Posterior vena cava (tissue), 2 donors: ENCODE measurements at regions of chr11 and their contacts with region 1.

Region 1: GRCh38 chr11:57644748-57645688 is 4.7 kb downstream of the YPEL4 start:
- DNase-seq: peak; percentile 91

Region 2: GRCh38 chr11:57456960-57457642 is 187.9 kb before region 1 on chr11:
- intact Hi-C with region 1: loop called in 1 of 2 experiments (anchors 10 kb)
- DNase-seq: peak; percentile 98

Region 3: GRCh38 chr11:57567515-57568329 is 77.3 kb before region 1 on chr11 and contains the start of gene UBE2L6:
- intact Hi-C with region 1: loop called (anchors 2 to 5 kb)
- DNase-seq: peak; percentile 96
- total RNA-seq, gene UBE2L6: 50.3 to 56.9 TPM

Region 4: GRCh38 chr11:57588046-57588710 is 56.8 kb before region 1 on chr11:
- intact Hi-C with region 1: no loop called
- DNase-seq: no peak

Region 5: DNA sequence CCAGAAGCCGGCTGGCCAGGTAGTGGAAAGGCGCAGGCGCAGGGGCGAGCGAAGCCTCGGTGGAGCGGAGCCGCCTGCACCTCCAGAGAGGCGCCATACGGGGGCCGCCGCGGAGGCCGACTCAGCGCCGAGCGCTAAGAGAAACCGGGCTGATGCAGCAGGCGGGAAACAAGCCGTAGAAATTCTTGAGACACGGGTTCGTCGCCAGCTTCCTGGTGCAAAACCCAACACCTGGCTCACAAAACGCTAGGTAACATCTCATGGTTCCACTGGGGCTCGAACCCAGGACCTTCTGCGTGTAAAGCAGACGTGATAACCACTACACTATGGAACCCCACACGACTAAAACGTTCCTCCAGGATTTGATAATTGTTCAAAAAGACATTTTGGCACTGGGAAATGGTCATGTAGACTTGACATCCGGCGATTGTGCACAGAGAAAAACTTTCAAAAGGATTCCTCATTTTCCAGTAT is 1905.4 kb after region 1 on chr11:
- intact Hi-C with region 1: no loop called
- DNase-seq: peak; percentile 89